K562 (cell line): ENCODE measurements at regions of chr11 and their contacts with region 1.

Region 1: GRCh38 chr11:119481021-119481666 is 58.2 kb upstream of the THY1 start:
- DNase-seq: peak; percentile 76 to 90 (median 88)
- ATAC-seq: peak; percentile 95
- H3K4me3 ChIP-seq: no peak overlapping the region
- H3K27ac ChIP-seq: no peak overlapping the region
- H3K4me1 ChIP-seq: peaks cover 12 to 27% of the 10 kb centered on the region in 2 experiments; a peak in 4 of 5 replicates
- H3K27me3 ChIP-seq: peaks cover 0 to 40% of the 10 kb centered on the region in 2 experiments; a peak in 2 of 5 replicates
- CTCF ChIP-seq: peak; percentile 96 to 97 (median 97)
- EP300 ChIP-seq: no peak
- POLR2A ChIP-seq: no peak
- RAD21 ChIP-seq: peak; percentile 95

Region 2: DNA sequence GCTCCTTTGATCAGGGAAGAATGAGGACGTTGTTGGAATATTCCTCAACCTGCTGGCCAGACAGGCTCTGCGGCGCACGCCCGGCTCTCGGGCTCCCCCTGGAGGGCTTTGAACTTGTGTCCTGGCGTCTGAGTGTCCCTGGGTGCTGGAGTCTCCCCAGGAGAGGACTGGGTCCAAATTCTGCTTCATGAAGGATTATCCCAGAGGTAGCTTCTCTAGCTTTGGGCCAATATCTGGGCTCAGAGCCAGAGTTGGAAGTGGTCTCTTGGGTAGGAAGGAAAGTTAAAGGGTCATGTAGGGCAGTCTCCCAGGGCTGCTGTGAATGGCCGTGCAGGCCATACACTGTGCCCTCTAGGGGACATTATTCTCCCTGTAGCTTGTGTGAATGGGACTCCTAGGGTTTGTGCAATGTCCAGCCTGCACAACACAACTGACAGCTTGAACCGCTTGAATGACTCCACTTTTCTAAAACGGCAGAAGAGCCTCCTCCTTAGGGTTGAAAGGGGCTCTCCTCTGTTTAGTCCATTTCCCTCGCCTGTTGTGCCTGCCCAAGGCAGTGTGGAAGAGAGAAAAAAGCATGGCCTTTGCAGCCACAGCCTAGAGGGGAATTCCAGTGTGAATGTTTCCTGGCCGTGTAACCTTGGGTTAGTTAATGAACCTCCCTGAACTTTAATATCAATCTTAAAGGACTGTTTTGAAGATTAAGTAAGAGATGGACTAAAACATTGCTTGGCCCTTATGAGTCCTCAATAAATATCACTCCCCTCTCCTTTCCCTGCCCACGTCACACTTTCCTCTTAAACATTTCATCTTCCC is 53.0 kb after region 1 on chr11:
- CTCF ChIA-PET with region 1: interaction called, 3 read pairs
- POLR2A ChIA-PET with region 1: no interaction called
- in situ Hi-C with region 1: no loop called
- intact Hi-C with region 1: loop called (anchors 1 kb)
- DNase-seq: peak; percentile 69 to 78 (median 76)
- ATAC-seq: peak; percentile 99
- H3K4me3 ChIP-seq: no peak overlapping the region
- H3K27ac ChIP-seq: no peak overlapping the region
- H3K4me1 ChIP-seq: peaks cover 0 to 5% of the 10 kb centered on the region in 2 experiments; a peak in 1 of 5 replicates
- H3K27me3 ChIP-seq: peaks cover 0 to 28% of the 10 kb centered on the region in 2 experiments; a peak in 4 of 5 replicates
- CTCF ChIP-seq: peak; percentile 78 to 97 (median 94)
- EP300 ChIP-seq: no peak
- POLR2A ChIP-seq: no peak
- RAD21 ChIP-seq: peak; percentile 73 to 83

Region 3: GRCh38 chr11:119599864-119600541 is 118.9 kb after region 1 on chr11:
- CTCF ChIA-PET with region 1: no interaction called
- POLR2A ChIA-PET with region 1: no interaction called
- in situ Hi-C with region 1: no loop called
- intact Hi-C with region 1: no loop called
- DNase-seq: no peak
- ATAC-seq: no peak
- H3K4me3 ChIP-seq: no peak overlapping the region
- H3K27ac ChIP-seq: no peak overlapping the region
- H3K4me1 ChIP-seq: peaks cover 9% of the 10 kb centered on the region in 2 experiments; a peak in 4 of 5 replicates
- H3K27me3 ChIP-seq: peaks cover 27 to 49% of the 10 kb centered on the region in 2 experiments; a peak in 4 of 5 replicates
- CTCF ChIP-seq: no peak
- EP300 ChIP-seq: no peak
- POLR2A ChIP-seq: no peak
- RAD21 ChIP-seq: no peak

Region 4: GRCh38 chr11:119634301-119634700 is 153.2 kb after region 1 on chr11:
- CTCF ChIA-PET with region 1: no interaction called
- POLR2A ChIA-PET with region 1: no interaction called
- in situ Hi-C with region 1: no loop called
- intact Hi-C with region 1: loop called (anchors 10 kb)
- DNase-seq: no peak
- ATAC-seq: no peak
- H3K4me3 ChIP-seq: no peak overlapping the region
- H3K27ac ChIP-seq: no peak overlapping the region
- H3K4me1 ChIP-seq: no peaks in the 10 kb centered on the region; a peak in 1 of 5 replicates
- H3K27me3 ChIP-seq: peaks cover 3 to 62% of the 10 kb centered on the region in 2 experiments; a peak in 4 of 5 replicates
- CTCF ChIP-seq: no peak
- EP300 ChIP-seq: no peak
- POLR2A ChIP-seq: no peak
- RAD21 ChIP-seq: no peak

Region 5: GRCh38 chr11:119728651-119729580 is 247.8 kb after region 1 on chr11 and contains the start of gene NECTIN1:
- CTCF ChIA-PET with region 1: interaction called, 16 read pairs
- POLR2A ChIA-PET with region 1: no interaction called
- in situ Hi-C with region 1: loop called (anchors 10 kb)
- intact Hi-C with region 1: loop called (anchors 2 kb)
- DNase-seq: peak; percentile 79 to 93 (median 90)
- ATAC-seq: peak; percentile 99
- H3K4me3 ChIP-seq: peak within 1 kb of the TSS; percentile 54
- H3K27ac ChIP-seq: no peak within 1 kb of the TSS
- H3K4me1 ChIP-seq: peaks cover 0 to 25% of the 10 kb centered on the region in 2 experiments; a peak in 2 of 5 replicates
- H3K27me3 ChIP-seq: peaks cover 24 to 54% of the 10 kb centered on the region in 2 experiments; a peak in 3 of 5 replicates
- CTCF ChIP-seq: peak; percentile 73 to 84 (median 74)
- EP300 ChIP-seq: no peak
- POLR2A ChIP-seq: no peak
- RAD21 ChIP-seq: peak; percentile 65 to 83
- polyA plus RNA-seq, gene NECTIN1: 0.21 TPM in 1 of 2 experiments, not detected in the other

Region 6: GRCh38 chr11:119782739-119783072 is 301.6 kb after region 1 on chr11:
- CTCF ChIA-PET with region 1: no interaction called
- POLR2A ChIA-PET with region 1: no interaction called
- in situ Hi-C with region 1: no loop called
- intact Hi-C with region 1: no loop called
- DNase-seq: peak in 3 of 4 experiments; percentile 13 to 45 (median 19)
- ATAC-seq: 0 out of 3 replicates have a peak, but pooled peaks have one; percentile 41
- H3K4me3 ChIP-seq: no peak overlapping the region
- H3K27ac ChIP-seq: no peak overlapping the region
- H3K4me1 ChIP-seq: no peaks in the 10 kb centered on the region; a peak in 1 of 5 replicates
- H3K27me3 ChIP-seq: peaks cover 4 to 76% of the 10 kb centered on the region in 2 experiments; a peak in 4 of 5 replicates
- CTCF ChIP-seq: no peak
- EP300 ChIP-seq: no peak
- POLR2A ChIP-seq: no peak
- RAD21 ChIP-seq: no peak